H1 (cell line): ENCODE measurements at regions of chr3 and their contacts with region 1.

Region 1: DNA sequence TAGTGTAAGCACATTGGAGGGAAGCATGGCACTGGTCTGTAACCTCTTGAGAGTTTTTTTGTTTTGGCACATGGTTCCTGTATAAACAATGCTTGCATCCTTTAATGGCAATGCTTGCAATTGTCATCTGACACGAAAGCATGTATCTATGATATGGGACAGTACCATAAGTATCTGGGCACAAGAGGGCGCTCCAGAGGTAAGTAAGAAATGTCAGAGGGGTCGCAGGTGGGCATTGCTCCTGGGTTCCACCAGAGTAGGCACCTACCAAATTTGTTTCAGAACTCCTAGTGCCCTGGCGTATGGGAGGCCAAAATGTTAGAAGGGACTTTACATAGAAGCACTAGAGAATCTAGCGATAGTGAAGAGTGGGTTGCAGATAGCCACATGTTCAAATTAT is 58.7 kb upstream of the BCHE start:
- DNase-seq: peak in 1 of 2 experiments; percentile 84
- H3K4me3 ChIP-seq: no peak overlapping the region
- H3K27ac ChIP-seq: no peak overlapping the region
- H3K4me1 ChIP-seq: peaks cover 0 to 6% (median 0%) of the 10 kb centered on the region in 4 experiments; a peak in 2 of 7 replicates
- H3K27me3 ChIP-seq: no peaks in the 10 kb centered on the region
- CTCF ChIP-seq: peak; percentile 52 to 76 (median 63)
- EP300 ChIP-seq: no peak
- POLR2A ChIP-seq: no peak
- RAD21 ChIP-seq: peak; percentile 81 to 85

Region 2: DNA sequence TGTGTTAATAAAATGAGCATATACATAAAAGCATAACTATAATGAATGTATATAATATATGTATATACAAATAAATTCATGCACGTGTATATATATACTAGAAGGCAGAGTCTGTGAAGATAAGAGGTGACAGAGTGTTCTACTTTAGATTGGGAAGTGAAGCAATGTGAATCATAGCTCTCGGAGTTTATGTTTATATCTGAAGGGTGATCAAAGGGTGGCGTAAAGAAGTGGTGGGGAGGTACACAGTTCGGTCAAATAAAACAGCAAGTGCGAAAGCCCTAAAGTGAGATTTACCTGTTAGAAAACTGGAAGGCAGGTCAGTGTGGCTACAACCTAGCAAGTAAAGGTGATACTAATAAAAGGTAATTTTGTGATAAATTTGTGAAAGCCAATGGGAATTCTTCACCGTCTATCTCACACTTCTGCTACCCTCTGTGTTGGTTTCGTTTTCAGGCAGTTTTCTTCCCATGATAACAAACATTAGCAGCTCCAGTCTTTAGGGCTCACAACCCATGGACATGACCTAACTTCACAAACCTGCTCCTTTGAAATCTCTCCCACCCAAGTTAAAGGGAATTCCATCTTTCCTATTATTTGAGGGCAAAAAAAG is 11.9 kb before region 1 on chr3:
- CTCF ChIA-PET with region 1: interaction called, 15 read pairs
- POLR2A ChIA-PET with region 1: no interaction called
- DNase-seq: no peak
- H3K4me3 ChIP-seq: no peak overlapping the region; a peak in 1 of 8 replicates
- H3K27ac ChIP-seq: no peak overlapping the region
- H3K4me1 ChIP-seq: peaks cover 0 to 6% (median 2%) of the 10 kb centered on the region in 4 experiments; a peak in 2 of 7 replicates
- H3K27me3 ChIP-seq: no peaks in the 10 kb centered on the region
- CTCF ChIP-seq: no peak
- EP300 ChIP-seq: no peak
- POLR2A ChIP-seq: no peak
- RAD21 ChIP-seq: no peak

Region 3: GRCh38 chr3:165919284-165919683 is 23.4 kb after region 1 on chr3:
- CTCF ChIA-PET with region 1: no interaction called
- POLR2A ChIA-PET with region 1: no interaction called
- DNase-seq: no peak
- H3K4me3 ChIP-seq: no peak overlapping the region
- H3K27ac ChIP-seq: no peak overlapping the region
- H3K4me1 ChIP-seq: no peaks in the 10 kb centered on the region
- H3K27me3 ChIP-seq: no peaks in the 10 kb centered on the region
- CTCF ChIP-seq: no peak
- EP300 ChIP-seq: no peak
- POLR2A ChIP-seq: no peak
- RAD21 ChIP-seq: no peak

Region 4: GRCh38 chr3:166013073-166013679 is 117.3 kb after region 1 on chr3:
- CTCF ChIA-PET with region 1: interaction called, 10 read pairs
- POLR2A ChIA-PET with region 1: no interaction called
- DNase-seq: no peak
- H3K4me3 ChIP-seq: no peak overlapping the region
- H3K27ac ChIP-seq: no peak overlapping the region
- H3K4me1 ChIP-seq: no peaks in the 10 kb centered on the region
- H3K27me3 ChIP-seq: no peaks in the 10 kb centered on the region
- CTCF ChIP-seq: peak in 1 of 3 experiments; percentile 24; a peak in 2 of 4 replicates
- EP300 ChIP-seq: no peak
- POLR2A ChIP-seq: no peak
- RAD21 ChIP-seq: peak in 1 of 2 experiments; percentile 70